Mammary epithelial cell (primary cell): ENCODE measurements at regions of chr3 and their contacts with region 1.

Region 1: DNA sequence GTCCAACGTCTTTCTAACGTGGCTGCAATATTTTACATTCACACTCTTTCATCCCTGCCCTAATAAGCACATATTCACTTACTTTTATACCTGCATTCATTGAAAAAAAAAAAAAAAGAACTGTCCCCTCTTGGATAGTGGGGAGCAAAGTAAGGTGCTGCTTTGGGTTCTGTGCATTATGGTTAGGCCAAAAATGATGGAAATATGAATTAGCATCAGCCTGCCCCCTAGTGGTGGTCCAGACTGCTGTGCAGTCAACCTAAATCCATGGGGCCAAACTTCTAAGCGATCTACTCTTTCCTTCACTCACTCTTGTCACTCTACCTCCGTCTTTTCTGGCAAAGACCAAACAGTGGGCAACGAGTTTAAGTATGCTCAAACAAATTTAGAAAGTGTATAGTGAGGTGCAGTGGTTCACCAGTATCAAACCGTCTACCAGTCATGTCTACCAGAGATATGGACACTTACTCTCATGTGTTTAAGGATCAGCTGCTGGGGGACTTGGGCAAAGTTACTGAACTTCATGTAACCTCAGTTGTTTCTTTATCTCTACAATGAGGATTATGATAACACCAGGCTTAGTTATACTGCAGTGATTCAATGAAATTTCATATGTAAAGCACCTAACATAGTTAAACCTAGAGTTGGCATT is 61.5 kb upstream of the GRM7 start:
- DNase-seq: peak; percentile 18
- H3K4me3 ChIP-seq: no peak overlapping the region
- H3K27ac ChIP-seq: no peak overlapping the region
- H3K4me1 ChIP-seq: no peaks in the 10 kb centered on the region
- H3K27me3 ChIP-seq: no peaks in the 10 kb centered on the region
- CTCF ChIP-seq: peak; percentile 88 to 94

Region 2: GRCh38 chr3:5226783-5227182 is 1572.6 kb before region 1 on chr3:
- CTCF ChIA-PET with region 1: no interaction called
- dilution Hi-C with region 1: no loop called
- in situ Hi-C with region 1: no loop called
- intact Hi-C with region 1: loop called (anchors 5 kb)
- DNase-seq: no peak
- H3K4me3 ChIP-seq: no peak overlapping the region
- H3K27ac ChIP-seq: no peak overlapping the region
- H3K4me1 ChIP-seq: no peaks in the 10 kb centered on the region
- H3K27me3 ChIP-seq: no peaks in the 10 kb centered on the region
- CTCF ChIP-seq: peak; percentile 41 to 43

Region 3: GRCh38 chr3:5426094-5426883 is 1373.1 kb before region 1 on chr3:
- CTCF ChIA-PET with region 1: no interaction called
- dilution Hi-C with region 1: no loop called
- in situ Hi-C with region 1: no loop called
- intact Hi-C with region 1: loop called (anchors 2 kb)
- DNase-seq: peak; percentile 53
- H3K4me3 ChIP-seq: no peak overlapping the region
- H3K27ac ChIP-seq: no peak overlapping the region
- H3K4me1 ChIP-seq: no peaks in the 10 kb centered on the region
- H3K27me3 ChIP-seq: no peaks in the 10 kb centered on the region
- CTCF ChIP-seq: peak; percentile 90 to 92

Region 4: GRCh38 chr3:6892803-6893202 is 93.4 kb after region 1 on chr3:
- CTCF ChIA-PET with region 1: no interaction called
- dilution Hi-C with region 1: no loop called
- in situ Hi-C with region 1: no loop called
- intact Hi-C with region 1: no loop called
- DNase-seq: no peak
- H3K4me3 ChIP-seq: no peak overlapping the region
- H3K27ac ChIP-seq: no peak overlapping the region
- H3K4me1 ChIP-seq: no peaks in the 10 kb centered on the region
- H3K27me3 ChIP-seq: no peaks in the 10 kb centered on the region
- CTCF ChIP-seq: no peak